GM12878 (cell line): ENCODE measurements at regions of chr6 and their contacts with region 1.

Region 1: GRCh38 chr6:37761554-37762263 is 57.8 kb upstream of the ZFAND3 start:
- DNase-seq: no peak
- ATAC-seq: peak; percentile 81
- H3K4me3 ChIP-seq: no peak overlapping the region
- H3K27ac ChIP-seq: no peak overlapping the region
- H3K4me1 ChIP-seq: no peaks in the 10 kb centered on the region
- H3K27me3 ChIP-seq: no peaks in the 10 kb centered on the region
- CTCF ChIP-seq: no peak
- EP300 ChIP-seq: no peak; a peak in 1 of 4 replicates
- POLR2A ChIP-seq: no peak
- RAD21 ChIP-seq: no peak

Region 2: GRCh38 chr6:37741757-37742400 is 19.8 kb before region 1 on chr6:
- CTCF ChIA-PET with region 1: interaction called, 11 read pairs
- POLR2A ChIA-PET with region 1: interaction called, 4 read pairs
- RAD21 ChIA-PET with region 1: interaction called, 3 read pairs
- SMC1A ChIA-PET with region 1: interaction called, 5 read pairs
- in situ Hi-C with region 1: no loop called
- intact Hi-C with region 1: no loop called
- DNase-seq: no peak
- ATAC-seq: peak; percentile 72
- H3K4me3 ChIP-seq: no peak overlapping the region
- H3K27ac ChIP-seq: no peak overlapping the region
- H3K4me1 ChIP-seq: no peaks in the 10 kb centered on the region
- H3K27me3 ChIP-seq: peaks cover 2 to 5% of the 10 kb centered on the region in 2 experiments; a peak in 3 of 4 replicates
- CTCF ChIP-seq: peak; percentile 29 to 41 (median 30); a peak in 3 of 6 replicates
- EP300 ChIP-seq: no peak
- POLR2A ChIP-seq: no peak
- RAD21 ChIP-seq: peak; percentile 41; the same call in 1 of the 2 replicates

Region 3: DNA sequence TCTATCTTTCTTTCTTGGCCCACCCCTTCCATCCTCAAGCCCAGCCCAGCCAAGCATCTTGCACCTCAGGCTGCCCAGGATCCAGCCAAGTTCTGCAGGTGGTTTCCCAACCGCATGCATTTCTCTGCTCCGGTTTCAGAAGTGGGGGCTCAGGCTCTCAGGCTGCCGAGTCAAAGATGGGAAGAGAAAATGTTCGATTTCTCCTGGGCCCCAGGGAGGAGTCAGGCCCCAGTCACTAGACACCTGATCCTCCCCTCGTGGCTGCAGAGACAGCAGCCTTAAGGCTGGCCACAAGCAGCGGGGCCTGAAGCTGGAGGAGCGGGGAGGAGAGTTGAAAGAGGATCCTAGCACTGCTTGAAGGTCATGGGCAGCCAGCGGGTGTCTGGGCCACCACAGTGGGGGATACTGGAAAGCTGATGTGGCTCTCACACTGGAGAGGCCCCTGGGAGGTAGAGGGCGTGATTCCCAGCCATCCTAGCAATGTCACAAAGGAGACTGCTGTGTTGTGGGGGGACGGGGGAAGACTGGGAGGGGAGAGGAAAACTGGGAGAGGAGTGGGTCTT is 15.6 kb after region 1 on chr6:
- CTCF ChIA-PET with region 1: interaction called, 5 read pairs
- POLR2A ChIA-PET with region 1: interaction called, 3 read pairs
- RAD21 ChIA-PET with region 1: interaction called, 16 read pairs
- SMC1A ChIA-PET with region 1: interaction called, 13 read pairs
- in situ Hi-C with region 1: no loop called
- intact Hi-C with region 1: no loop called
- DNase-seq: peak; percentile 55
- ATAC-seq: peak; percentile 85
- H3K4me3 ChIP-seq: no peak overlapping the region
- H3K27ac ChIP-seq: peak overlapping the region; percentile 34
- H3K4me1 ChIP-seq: peaks cover 29% of the 10 kb centered on the region
- H3K27me3 ChIP-seq: no peaks in the 10 kb centered on the region
- CTCF ChIP-seq: no peak
- EP300 ChIP-seq: no peak
- POLR2A ChIP-seq: no peak
- RAD21 ChIP-seq: no peak